ENCODE measurements at regions of chr1 and their contacts with region 1.

Region 1: GRCh38 chr1:111222308-111223125 is 5.0 kb upstream of the CHI3L2 start:
- DNase-seq: peak; percentile 56
- H3K4me3 ChIP-seq: no peak overlapping the region
- H3K27ac ChIP-seq: no peak overlapping the region
- H3K4me1 ChIP-seq: no peaks in the 10 kb centered on the region
- H3K27me3 ChIP-seq: peaks cover 5 to 8% of the 10 kb centered on the region in 2 experiments
- CTCF ChIP-seq: peak; percentile 80 to 97
- POLR2A ChIP-seq: no peak

Region 2: DNA sequence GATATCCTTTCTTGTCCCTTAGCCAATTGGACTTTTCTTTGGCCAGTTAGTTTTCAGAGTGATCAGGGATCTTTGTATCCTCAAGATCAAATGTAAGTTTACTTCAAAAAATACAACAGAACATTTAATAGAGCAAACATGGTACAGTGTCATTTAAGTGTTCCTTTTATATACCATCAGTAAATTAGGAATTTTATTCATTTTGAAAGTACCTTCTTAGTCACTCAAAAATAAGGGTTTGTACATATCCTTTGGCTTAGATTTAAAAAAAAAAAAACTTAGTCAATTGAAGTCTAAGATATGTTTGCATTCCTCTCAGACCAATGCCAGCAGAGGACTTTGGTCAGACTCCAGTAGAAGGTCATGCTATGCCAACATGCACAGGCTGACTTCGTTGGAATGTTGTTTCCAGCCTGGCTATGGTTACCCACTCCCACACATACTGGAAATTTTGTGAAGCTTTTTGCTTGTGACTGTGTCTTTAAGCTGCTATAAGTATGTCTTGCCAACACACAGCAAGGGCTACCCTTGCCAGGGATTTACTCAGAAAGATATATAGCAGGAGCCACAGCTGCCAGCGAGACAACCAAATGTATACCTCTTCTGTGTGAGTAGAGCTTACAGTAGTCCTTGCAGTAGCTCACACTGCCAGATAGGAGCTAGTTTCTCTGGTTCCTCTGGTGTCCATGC is 177.3 kb before region 1 on chr1:
- CTCF ChIA-PET with region 1: no interaction called
- POLR2A ChIA-PET with region 1: no interaction called
- dilution Hi-C with region 1: no loop called
- intact Hi-C with region 1: no loop called
- DNase-seq: no peak
- H3K4me3 ChIP-seq: no peak overlapping the region
- H3K27ac ChIP-seq: no peak overlapping the region
- H3K4me1 ChIP-seq: no peaks in the 10 kb centered on the region
- H3K27me3 ChIP-seq: no peaks in the 10 kb centered on the region
- CTCF ChIP-seq: no peak
- POLR2A ChIP-seq: no peak

Region 3: GRCh38 chr1:111406321-111406768 is 183.8 kb after region 1 on chr1:
- CTCF ChIA-PET with region 1: interaction called, 266 read pairs
- POLR2A ChIA-PET with region 1: no interaction called
- dilution Hi-C with region 1: no loop called
- intact Hi-C with region 1: no loop called
- DNase-seq: peak; percentile 83
- H3K4me3 ChIP-seq: no peak overlapping the region
- H3K27ac ChIP-seq: no peak overlapping the region
- H3K4me1 ChIP-seq: no peaks in the 10 kb centered on the region
- H3K27me3 ChIP-seq: peaks cover 9 to 14% of the 10 kb centered on the region in 2 experiments
- CTCF ChIP-seq: no peak
- POLR2A ChIP-seq: no peak

Region 4: GRCh38 chr1:111769517-111770146 is 547.1 kb after region 1 on chr1:
- CTCF ChIA-PET with region 1: interaction called, 10 read pairs
- POLR2A ChIA-PET with region 1: no interaction called
- dilution Hi-C with region 1: no loop called
- intact Hi-C with region 1: loop called (anchors 1 kb)
- DNase-seq: peak; percentile 70
- H3K4me3 ChIP-seq: no peak overlapping the region
- H3K27ac ChIP-seq: no peak overlapping the region
- H3K4me1 ChIP-seq: no peaks in the 10 kb centered on the region
- H3K27me3 ChIP-seq: no peaks in the 10 kb centered on the region
- CTCF ChIP-seq: peak; percentile 51 to 62
- POLR2A ChIP-seq: peak; percentile 18